ENCODE measurements at regions of chr18 and their contacts with region 1.

Region 1: GRCh38 chr18:58253871-58254270 is 209.8 kb downstream of the NEDD4L start:
- DNase-seq: no peak
- H3K4me3 Mint-ChIP-seq: no peak overlapping the region
- H3K27ac Mint-ChIP-seq: no peak overlapping the region
- H3K4me1 Mint-ChIP-seq: no peaks in the 10 kb centered on the region
- H3K27me3 Mint-ChIP-seq: no peaks in the 10 kb centered on the region

Region 2: DNA sequence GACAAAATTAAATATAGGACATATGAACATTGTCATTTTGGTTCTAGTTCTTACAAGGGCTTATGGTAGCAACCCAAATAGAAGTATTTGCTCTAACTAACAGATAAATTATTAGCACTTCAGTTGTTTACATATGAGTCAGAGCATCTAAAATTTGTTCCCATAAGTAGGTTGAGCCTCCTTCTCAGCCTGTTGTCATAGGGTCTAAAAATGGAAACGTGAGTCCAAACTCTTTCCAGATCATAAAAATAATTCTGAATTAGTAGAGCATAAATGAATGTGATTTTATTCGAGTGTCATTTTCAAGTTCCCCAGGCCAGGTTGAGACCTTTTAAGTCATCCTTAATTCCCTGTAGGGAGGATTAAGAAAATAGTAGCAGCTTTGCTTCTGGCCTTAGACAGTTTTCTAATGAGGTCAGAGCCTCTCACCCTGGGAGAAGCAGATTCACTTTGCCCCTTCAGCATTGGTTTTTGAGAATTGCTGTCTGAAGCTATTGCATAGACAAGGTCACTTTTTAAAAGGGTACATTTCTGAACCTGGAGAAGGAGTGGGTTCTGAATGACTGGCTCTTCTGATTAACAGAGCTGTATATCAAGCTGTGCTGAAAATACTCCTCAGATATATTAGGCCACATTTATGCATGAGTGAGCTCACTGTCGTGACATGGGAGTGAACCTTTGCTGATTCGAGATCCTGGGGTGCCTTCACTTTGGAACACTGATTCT is 45.5 kb before region 1 on chr18:
- CTCF ChIA-PET with region 1: no interaction called
- intact Hi-C with region 1: no loop called
- DNase-seq: no peak
- H3K4me3 Mint-ChIP-seq: no peak overlapping the region
- H3K27ac Mint-ChIP-seq: no peak overlapping the region
- H3K4me1 Mint-ChIP-seq: peaks cover 4% of the 10 kb centered on the region
- H3K27me3 Mint-ChIP-seq: no peaks in the 10 kb centered on the region

Region 3: DNA sequence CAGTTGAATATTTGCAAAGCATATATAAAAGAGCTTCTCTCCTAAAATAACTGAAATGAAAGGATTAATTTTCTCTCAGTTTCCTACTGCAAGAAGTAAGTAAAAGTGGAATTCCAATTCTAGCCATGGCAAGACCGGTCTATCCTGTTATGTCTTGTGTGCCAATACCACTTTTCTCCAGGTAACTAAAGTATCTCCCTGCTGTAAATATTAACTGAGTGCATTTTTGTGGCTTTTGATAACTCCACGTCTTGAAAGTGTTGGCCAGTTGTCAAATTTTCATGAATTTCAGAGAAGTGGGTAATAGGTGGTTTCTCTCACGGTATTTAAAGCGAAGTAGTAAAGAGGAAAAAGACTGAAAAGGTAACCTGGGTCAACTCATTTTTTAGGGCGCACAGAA is 16.1 kb after region 1 on chr18:
- CTCF ChIA-PET with region 1: no interaction called
- intact Hi-C with region 1: loop called (anchors 2 kb)
- DNase-seq: no peak
- H3K4me3 Mint-ChIP-seq: no peak overlapping the region
- H3K27ac Mint-ChIP-seq: no peak overlapping the region
- H3K4me1 Mint-ChIP-seq: peaks cover 14% of the 10 kb centered on the region
- H3K27me3 Mint-ChIP-seq: no peaks in the 10 kb centered on the region

Region 4: DNA sequence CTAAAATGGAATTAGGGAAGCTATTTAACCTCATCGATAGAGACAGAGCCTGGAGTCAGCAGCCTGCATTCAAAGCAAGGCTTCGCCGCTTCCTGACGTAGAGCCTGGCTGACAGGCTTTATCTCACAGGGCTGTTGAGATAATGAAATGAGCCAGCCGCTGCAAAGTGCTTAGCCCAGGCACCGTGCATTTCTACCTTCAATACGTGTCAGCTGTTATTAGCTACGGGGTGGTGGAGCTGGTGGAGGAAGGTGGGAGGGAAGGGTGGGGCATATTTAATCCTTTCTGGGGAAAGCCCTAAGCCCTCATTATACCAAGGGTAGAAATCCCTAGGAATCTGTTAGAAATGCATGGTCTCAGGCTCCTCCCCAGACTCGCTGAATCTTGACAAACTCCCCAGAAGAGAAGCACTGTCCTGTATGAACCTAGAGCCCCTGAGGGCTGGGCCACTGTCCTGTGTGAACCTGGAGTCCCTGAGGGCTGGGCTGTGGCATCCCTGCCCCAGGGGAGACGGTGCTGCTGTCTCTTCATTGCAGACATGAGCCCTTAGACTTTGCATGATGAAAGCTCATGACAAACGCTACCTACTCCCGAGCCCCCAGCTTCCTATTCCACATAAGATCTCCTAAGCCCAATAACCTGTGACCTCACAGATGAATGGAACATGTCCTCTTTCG is 302.6 kb after region 1 on chr18:
- CTCF ChIA-PET with region 1: no interaction called
- intact Hi-C with region 1: no loop called
- DNase-seq: no peak
- H3K4me3 Mint-ChIP-seq: no peak overlapping the region
- H3K27ac Mint-ChIP-seq: no peak overlapping the region
- H3K4me1 Mint-ChIP-seq: peaks cover 26% of the 10 kb centered on the region
- H3K27me3 Mint-ChIP-seq: no peaks in the 10 kb centered on the region